GM12878 (cell line): ENCODE measurements at regions of chr1 and their contacts with region 1.

Region 1: GRCh38 chr1:181430015-181430885 is 53.1 kb upstream of the CACNA1E start:
- DNase-seq: peak; percentile 79
- ATAC-seq: peak; percentile 90
- H3K4me3 ChIP-seq: no peak overlapping the region
- H3K27ac ChIP-seq: peak overlapping the region; percentile 83
- H3K4me1 ChIP-seq: peaks cover 39% of the 10 kb centered on the region
- H3K27me3 ChIP-seq: no peaks in the 10 kb centered on the region; a peak in 1 of 4 replicates
- CTCF ChIP-seq: no peak
- EP300 ChIP-seq: peak; percentile 56 to 75
- POLR2A ChIP-seq: no peak
- RAD21 ChIP-seq: no peak

Region 2: GRCh38 chr1:181397845-181398244 is 32.4 kb before region 1 on chr1:
- CTCF ChIA-PET with region 1: interaction called, 14 read pairs
- POLR2A ChIA-PET with region 1: no interaction called
- RAD21 ChIA-PET with region 1: interaction called, 11 read pairs
- SMC1A ChIA-PET with region 1: interaction called, 15 read pairs
- in situ Hi-C with region 1: no loop called
- intact Hi-C with region 1: no loop called
- DNase-seq: peak; percentile 34
- ATAC-seq: peak; percentile 87
- H3K4me3 ChIP-seq: no peak overlapping the region
- H3K27ac ChIP-seq: no peak overlapping the region
- H3K4me1 ChIP-seq: peaks cover 20% of the 10 kb centered on the region
- H3K27me3 ChIP-seq: no peaks in the 10 kb centered on the region
- CTCF ChIP-seq: no peak
- EP300 ChIP-seq: no peak
- POLR2A ChIP-seq: no peak
- RAD21 ChIP-seq: no peak

Region 3: DNA sequence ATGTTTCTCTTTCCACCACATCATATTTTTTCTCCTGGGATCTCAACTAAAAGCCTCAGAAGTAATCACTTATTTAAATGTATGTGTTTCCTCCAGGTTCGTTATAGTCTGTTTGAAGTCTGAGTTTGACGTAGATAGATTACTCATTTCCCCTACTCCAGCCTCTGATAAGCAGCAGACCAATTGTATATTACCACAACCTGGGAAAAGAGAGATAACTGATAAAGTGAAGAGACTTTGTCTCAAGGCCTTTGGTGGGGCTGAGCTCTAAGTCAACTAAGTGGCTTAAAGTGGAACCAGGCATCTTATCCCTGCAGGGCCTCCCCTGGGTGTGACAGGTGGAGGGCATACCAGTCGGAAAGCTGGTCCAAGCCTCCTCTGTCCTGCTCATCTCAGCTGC is 18.2 kb after region 1 on chr1:
- CTCF ChIA-PET with region 1: interaction called, 26 read pairs
- POLR2A ChIA-PET with region 1: interaction called, 15 read pairs
- RAD21 ChIA-PET with region 1: interaction called, 11 read pairs
- SMC1A ChIA-PET with region 1: interaction called, 10 read pairs
- in situ Hi-C with region 1: no loop called
- intact Hi-C with region 1: no loop called
- DNase-seq: no peak
- ATAC-seq: no peak
- H3K4me3 ChIP-seq: no peak overlapping the region
- H3K27ac ChIP-seq: no peak overlapping the region
- H3K4me1 ChIP-seq: no peaks in the 10 kb centered on the region; the same call in 1 of the 2 replicates
- H3K27me3 ChIP-seq: no peaks in the 10 kb centered on the region
- CTCF ChIP-seq: no peak
- EP300 ChIP-seq: no peak
- POLR2A ChIP-seq: no peak
- RAD21 ChIP-seq: no peak

Region 4: DNA sequence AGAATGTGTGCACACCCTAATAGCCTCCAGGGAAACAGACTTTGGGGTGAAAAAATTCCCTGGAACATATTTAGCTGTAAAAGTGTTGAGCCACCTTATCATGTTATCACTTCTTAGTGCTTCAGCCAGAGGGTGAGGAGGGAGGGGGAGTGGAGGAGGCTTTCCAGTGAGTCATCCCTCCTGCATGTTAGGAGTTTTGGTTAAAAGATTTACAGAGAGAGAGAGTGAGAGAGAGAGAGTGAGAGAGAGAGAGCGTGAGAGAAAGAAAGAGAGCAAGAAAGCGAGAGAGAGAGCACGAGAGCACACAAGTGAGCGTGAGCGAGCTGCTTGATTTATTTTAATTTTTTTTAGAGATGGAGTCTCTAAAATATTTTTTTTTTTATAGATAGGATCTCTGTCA is 39.6 kb after region 1 on chr1:
- CTCF ChIA-PET with region 1: interaction called, 6 read pairs
- POLR2A ChIA-PET with region 1: interaction called, 5 read pairs
- RAD21 ChIA-PET with region 1: interaction called, 7 read pairs
- SMC1A ChIA-PET with region 1: interaction called, 123 read pairs
- in situ Hi-C with region 1: no loop called
- intact Hi-C with region 1: no loop called
- DNase-seq: no peak
- ATAC-seq: no peak
- H3K4me3 ChIP-seq: no peak overlapping the region
- H3K27ac ChIP-seq: no peak overlapping the region
- H3K4me1 ChIP-seq: no peaks in the 10 kb centered on the region
- H3K27me3 ChIP-seq: no peaks in the 10 kb centered on the region
- CTCF ChIP-seq: no peak
- EP300 ChIP-seq: no peak
- POLR2A ChIP-seq: no peak
- RAD21 ChIP-seq: no peak

Region 5: GRCh38 chr1:181490740-181491712 is 60.8 kb after region 1 on chr1:
- CTCF ChIA-PET with region 1: interaction called, 15 read pairs
- POLR2A ChIA-PET with region 1: interaction called, 38 read pairs
- RAD21 ChIA-PET with region 1: interaction called, 155 read pairs
- SMC1A ChIA-PET with region 1: interaction called, 123 read pairs
- in situ Hi-C with region 1: no loop called
- intact Hi-C with region 1: no loop called
- DNase-seq: no peak
- ATAC-seq: no peak
- H3K4me3 ChIP-seq: peak overlapping the region; percentile 10; the same call in 1 of the 2 replicates
- H3K27ac ChIP-seq: no peak overlapping the region
- H3K4me1 ChIP-seq: 0 out of 2 replicates have a peak, but pooled peaks cover 6% of the 10 kb centered on the region
- H3K27me3 ChIP-seq: no peaks in the 10 kb centered on the region
- CTCF ChIP-seq: no peak
- EP300 ChIP-seq: no peak
- POLR2A ChIP-seq: no peak
- RAD21 ChIP-seq: no peak